ENCODE measurements at regions of chr1 and their contacts with region 1.

Region 1: GRCh38 chr1:64864018-64864940 is 102.1 kb downstream of the JAK1 start:
- DNase-seq: peak in 8 of 9 donors; percentile 19 to 67 (median 50)
- ATAC-seq: peak; percentile 95
- H3K4me3 ChIP-seq: no peak overlapping the region
- H3K4me3 Mint-ChIP-seq: peak overlapping the region in 7 of 10 donors; percentile 3 to 65 (median 54)
- H3K27ac ChIP-seq: peak overlapping the region; percentile 29
- H3K27ac Mint-ChIP-seq: peak overlapping the region; percentile 26 to 93 (median 78)
- H3K4me1 ChIP-seq: peaks cover 15 to 29% of the 10 kb centered on the region in 2 donors
- H3K4me1 Mint-ChIP-seq: peaks cover 29 to 58% (median 39%) of the 10 kb centered on the region in 7 donors
- H3K27me3 ChIP-seq: no peaks in the 10 kb centered on the region
- H3K27me3 Mint-ChIP-seq: no peaks in the 10 kb centered on the region

Region 2: DNA sequence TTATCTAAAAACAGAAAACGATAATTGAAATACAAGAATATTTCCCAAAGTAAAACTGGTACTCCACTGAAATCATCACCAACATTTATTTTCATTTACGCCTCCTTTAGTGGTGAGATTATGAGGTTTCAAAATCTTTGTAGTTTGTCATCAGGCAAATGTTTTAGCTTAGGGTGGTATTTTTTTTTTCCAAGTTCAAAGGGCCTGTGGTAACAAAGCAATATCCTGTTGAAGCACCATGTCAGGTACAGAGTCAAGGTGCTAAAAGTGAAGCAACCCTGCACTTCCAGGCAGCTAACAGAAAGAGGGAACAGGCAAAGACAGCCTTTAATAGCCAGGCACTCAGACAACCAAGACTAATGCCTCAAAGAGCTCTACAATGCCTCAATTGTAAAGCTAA is 12.9 kb after region 1 on chr1:
- CTCF ChIA-PET with region 1: interaction called, 8 read pairs
- POLR2A ChIA-PET with region 1: interaction called, 3 read pairs
- intact Hi-C with region 1: loop called (anchors 1 kb)
- DNase-seq: peak in 7 of 9 donors; percentile 75 to 90 (median 87)
- ATAC-seq: peak; percentile 96
- H3K4me3 ChIP-seq: peak overlapping the region; percentile 8
- H3K4me3 Mint-ChIP-seq: peak overlapping the region; percentile 70 to 83 (median 76)
- H3K27ac ChIP-seq: peak overlapping the region; percentile 36
- H3K27ac Mint-ChIP-seq: peak overlapping the region; percentile 41 to 95 (median 90)
- H3K4me1 ChIP-seq: peaks cover 43 to 53% of the 10 kb centered on the region in 2 donors
- H3K4me1 Mint-ChIP-seq: peaks cover 38 to 88% (median 84%) of the 10 kb centered on the region in 7 donors
- H3K27me3 ChIP-seq: no peaks in the 10 kb centered on the region
- H3K27me3 Mint-ChIP-seq: no peaks in the 10 kb centered on the region

Region 3: DNA sequence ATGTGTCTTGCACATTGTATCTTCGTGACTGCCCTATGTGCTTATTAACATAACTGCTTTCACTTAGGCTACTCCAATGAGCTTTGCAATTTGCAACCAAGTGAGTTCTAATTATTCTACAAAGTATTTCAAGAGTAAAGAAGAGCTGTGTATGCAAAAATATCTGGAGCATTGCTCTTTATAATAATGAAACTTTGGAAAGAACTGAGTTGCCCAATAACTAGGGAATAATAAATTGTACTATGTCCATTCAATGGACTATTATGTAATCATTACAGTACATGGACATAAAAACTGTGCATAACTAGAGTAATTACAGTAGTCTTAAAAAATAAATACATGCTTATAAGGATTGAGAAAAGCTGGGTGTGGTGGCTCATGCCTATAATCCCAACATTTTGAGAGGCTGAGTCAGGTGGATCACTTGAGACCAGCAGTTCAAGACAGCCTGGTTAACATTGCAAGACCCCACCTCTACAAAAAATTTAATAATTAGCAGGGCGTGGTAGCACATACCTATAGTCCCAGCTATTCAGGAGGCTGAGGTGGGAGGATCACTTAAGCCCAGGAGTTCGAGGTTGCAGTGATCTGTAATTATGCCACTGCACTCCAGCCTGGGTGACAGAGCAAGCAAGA is 172.4 kb after region 1 on chr1:
- CTCF ChIA-PET with region 1: no interaction called
- POLR2A ChIA-PET with region 1: no interaction called
- intact Hi-C with region 1: loop called in 1 of 2 experiments (anchors 2 kb)
- DNase-seq: no peak
- ATAC-seq: no peak
- H3K4me3 ChIP-seq: no peak overlapping the region
- H3K4me3 Mint-ChIP-seq: no peak overlapping the region
- H3K27ac ChIP-seq: no peak overlapping the region
- H3K27ac Mint-ChIP-seq: peak overlapping the region in 1 of 9 donors; percentile 2
- H3K4me1 ChIP-seq: peaks cover 0 to under 1% of the 10 kb centered on the region in 2 donors
- H3K4me1 Mint-ChIP-seq: peaks cover 5 to 20% (median 14%) of the 10 kb centered on the region in 7 donors
- H3K27me3 ChIP-seq: no peaks in the 10 kb centered on the region
- H3K27me3 Mint-ChIP-seq: peaks cover 0 to 3% (median 0%) of the 10 kb centered on the region in 5 donors

Measured in naive thymus-derived CD4-positive, alpha-beta T cell (primary cell).